ENCODE measurements at regions of chr1 and their contacts with region 1.

Region 1: DNA sequence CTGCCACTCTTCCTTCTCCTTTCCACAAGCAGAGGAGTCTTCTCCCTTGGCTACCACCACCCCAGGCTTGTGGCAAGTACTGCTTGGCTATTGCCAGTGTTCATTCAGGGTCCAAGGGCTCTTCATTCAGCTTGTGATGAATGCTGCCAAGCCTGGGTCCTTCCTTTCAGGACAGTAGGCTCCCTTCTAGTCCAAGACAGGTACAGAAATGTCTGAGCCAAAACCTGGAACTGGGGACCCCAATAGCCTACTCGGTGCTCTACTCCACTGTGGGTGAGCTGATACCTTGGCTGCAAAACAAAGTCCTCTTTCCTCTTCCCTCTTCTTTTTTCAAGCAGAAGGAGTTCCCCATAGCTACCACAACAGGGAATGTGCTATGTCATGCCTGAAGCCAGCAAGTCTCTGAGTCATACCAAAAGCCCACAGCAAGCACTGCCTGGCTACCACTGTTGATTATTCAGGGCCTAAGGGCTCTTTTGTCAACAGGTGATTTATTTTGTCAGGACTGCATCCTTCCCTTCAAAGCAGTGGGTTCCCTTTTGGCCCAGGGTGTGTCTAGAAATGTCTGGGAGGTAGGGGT is 268.9 kb downstream of the HHAT start:
- DNase-seq: peak; percentile 59
- H3K4me3 ChIP-seq: no peak overlapping the region
- H3K27ac ChIP-seq: no peak overlapping the region
- H3K4me1 ChIP-seq: peaks cover 22% of the 10 kb centered on the region
- H3K27me3 ChIP-seq: peaks cover 20% of the 10 kb centered on the region
- CTCF ChIP-seq: no peak

Region 2: DNA sequence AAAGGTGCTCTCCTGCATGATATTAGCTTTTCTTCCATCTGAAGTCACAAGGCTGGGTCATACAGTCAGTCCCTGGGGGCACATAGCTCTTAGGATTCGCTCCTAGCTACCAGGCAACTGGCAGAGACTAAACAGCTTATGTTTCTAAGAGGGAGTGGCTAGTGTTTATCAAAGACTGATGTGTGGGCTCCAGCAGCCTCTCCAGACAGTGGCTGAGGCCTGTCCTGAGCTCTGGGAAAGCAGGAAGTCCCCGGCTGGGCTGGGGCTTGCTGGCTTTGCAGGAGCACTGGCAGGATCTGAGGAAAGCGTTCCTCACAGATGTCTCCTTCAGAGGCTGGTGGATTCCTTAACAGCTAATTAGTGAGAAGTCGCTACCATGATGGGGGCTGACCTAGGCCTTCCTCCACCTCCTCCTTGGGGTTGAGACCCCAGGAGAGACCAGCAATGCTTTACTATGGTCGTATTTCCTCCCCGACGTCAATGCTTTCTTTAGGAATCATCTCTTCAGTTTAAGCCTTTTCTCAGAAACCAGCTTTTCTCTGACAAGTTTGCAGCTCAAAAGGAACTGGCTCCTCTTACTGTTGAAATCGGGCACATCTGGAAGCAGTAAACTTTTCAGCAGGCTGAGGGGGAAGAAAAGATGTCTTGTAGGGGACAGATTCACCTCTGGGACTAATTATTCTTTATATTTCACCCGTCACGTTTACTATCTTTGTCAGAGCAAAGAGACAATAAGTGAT is 302.5 kb before region 1 on chr1:
- CTCF ChIA-PET with region 1: no interaction called
- POLR2A ChIA-PET with region 1: no interaction called
- intact Hi-C with region 1: no loop called
- DNase-seq: peak; percentile 96
- H3K4me3 ChIP-seq: peak overlapping the region; percentile 0
- H3K27ac ChIP-seq: peak overlapping the region; percentile 64
- H3K4me1 ChIP-seq: peaks cover 55% of the 10 kb centered on the region
- H3K27me3 ChIP-seq: no peaks in the 10 kb centered on the region
- CTCF ChIP-seq: no peak

Region 3: GRCh38 chr1:211145944-211146343 is 548.3 kb after region 1 on chr1:
- CTCF ChIA-PET with region 1: no interaction called
- POLR2A ChIA-PET with region 1: interaction called, 18 read pairs
- intact Hi-C with region 1: no loop called
- DNase-seq: no peak
- H3K4me3 ChIP-seq: no peak overlapping the region
- H3K27ac ChIP-seq: no peak overlapping the region
- H3K4me1 ChIP-seq: no peaks in the 10 kb centered on the region
- H3K27me3 ChIP-seq: peaks cover 45% of the 10 kb centered on the region
- CTCF ChIP-seq: no peak

Measured in A673 (cell line).